Naive thymus-derived CD4-positive, alpha-beta T cell (primary cell): ENCODE measurements at regions of chr17 and their contacts with region 1.

Region 1: DNA sequence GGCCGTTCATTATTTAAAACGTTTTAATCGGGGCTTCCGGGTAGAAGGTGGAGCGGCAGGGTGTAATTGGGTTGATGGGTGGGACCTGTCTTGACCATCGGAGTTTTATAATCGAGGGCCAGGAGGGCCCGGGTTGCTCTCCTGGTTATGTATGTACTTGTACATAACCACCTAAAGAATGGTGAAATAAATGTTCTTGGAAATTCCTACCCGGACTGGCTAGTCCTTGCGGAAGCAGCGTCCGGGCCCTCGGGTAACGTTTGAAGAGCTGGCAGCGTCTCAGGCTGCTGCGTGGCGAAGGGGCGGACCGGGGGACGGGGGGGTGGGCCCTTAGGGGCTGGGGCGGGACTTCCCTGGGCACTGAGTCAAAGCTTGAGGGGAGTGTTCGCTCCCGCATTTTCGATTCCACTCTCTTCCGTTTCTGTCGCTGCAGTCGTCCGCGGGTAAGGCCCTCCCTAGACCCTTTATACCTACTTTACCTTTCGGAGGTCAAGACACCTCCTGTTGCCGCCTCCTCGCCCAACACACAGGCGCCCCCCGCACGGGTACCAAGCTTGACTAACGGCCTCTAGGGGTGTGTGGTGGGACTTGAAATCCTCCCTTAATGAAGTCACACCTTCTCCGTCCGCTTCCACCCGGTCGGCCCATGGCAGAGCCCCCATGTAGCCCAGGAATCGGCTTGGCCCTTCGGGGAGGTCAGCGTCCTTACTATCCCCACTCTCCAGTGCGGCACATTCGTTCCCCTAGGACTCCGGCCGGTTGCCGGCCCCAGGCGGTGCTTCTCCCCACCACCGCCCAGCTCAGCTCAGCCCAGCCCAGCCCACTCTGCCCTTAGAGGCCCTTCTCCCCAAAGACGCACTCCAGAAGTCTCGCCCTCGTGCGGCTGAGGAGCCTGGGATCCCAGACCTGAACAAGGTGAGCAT is at the start of gene TMEM106A:
- DNase-seq: peak; percentile 50 to 72 (median 70)
- ATAC-seq: peak; percentile 93
- H3K4me3 ChIP-seq: peak within 1 kb of the TSS; percentile 89
- H3K4me3 Mint-ChIP-seq: peak within 1 kb of the TSS; percentile 89 to 100 (median 96)
- H3K27ac ChIP-seq: peak within 1 kb of the TSS; percentile 86
- H3K27ac Mint-ChIP-seq: peak within 1 kb of the TSS; percentile 89 to 98 (median 94)
- H3K4me1 ChIP-seq: peaks cover 15 to 17% of the 10 kb centered on the region in 2 donors
- H3K4me1 Mint-ChIP-seq: peaks cover 24 to 55% (median 46%) of the 10 kb centered on the region in 7 donors
- H3K27me3 ChIP-seq: no peaks in the 10 kb centered on the region
- H3K27me3 Mint-ChIP-seq: no peaks in the 10 kb centered on the region
- total RNA-seq, gene TMEM106A: 10.4 to 20.7 (median 13.9) TPM

Region 2: GRCh38 chr17:42850954-42851353 is 360.8 kb before region 1 on chr17 and contains the start of gene AOC3:
- CTCF ChIA-PET with region 1: no interaction called
- POLR2A ChIA-PET with region 1: no interaction called
- intact Hi-C with region 1: no loop called
- DNase-seq: no peak
- ATAC-seq: no peak
- H3K4me3 ChIP-seq: no peak within 1 kb of the TSS
- H3K4me3 Mint-ChIP-seq: no peak within 1 kb of the TSS
- H3K27ac ChIP-seq: no peak within 1 kb of the TSS
- H3K27ac Mint-ChIP-seq: no peak within 1 kb of the TSS
- H3K4me1 ChIP-seq: no peaks in the 10 kb centered on the region
- H3K4me1 Mint-ChIP-seq: peaks cover 0 to 8% (median 0%) of the 10 kb centered on the region in 7 donors
- H3K27me3 ChIP-seq: no peaks in the 10 kb centered on the region
- H3K27me3 Mint-ChIP-seq: peaks cover 0 to 8% (median 0%) of the 10 kb centered on the region in 5 donors
- total RNA-seq, gene AOC3: 0.98 to 2.0 (median 1.1) TPM

Region 3: DNA sequence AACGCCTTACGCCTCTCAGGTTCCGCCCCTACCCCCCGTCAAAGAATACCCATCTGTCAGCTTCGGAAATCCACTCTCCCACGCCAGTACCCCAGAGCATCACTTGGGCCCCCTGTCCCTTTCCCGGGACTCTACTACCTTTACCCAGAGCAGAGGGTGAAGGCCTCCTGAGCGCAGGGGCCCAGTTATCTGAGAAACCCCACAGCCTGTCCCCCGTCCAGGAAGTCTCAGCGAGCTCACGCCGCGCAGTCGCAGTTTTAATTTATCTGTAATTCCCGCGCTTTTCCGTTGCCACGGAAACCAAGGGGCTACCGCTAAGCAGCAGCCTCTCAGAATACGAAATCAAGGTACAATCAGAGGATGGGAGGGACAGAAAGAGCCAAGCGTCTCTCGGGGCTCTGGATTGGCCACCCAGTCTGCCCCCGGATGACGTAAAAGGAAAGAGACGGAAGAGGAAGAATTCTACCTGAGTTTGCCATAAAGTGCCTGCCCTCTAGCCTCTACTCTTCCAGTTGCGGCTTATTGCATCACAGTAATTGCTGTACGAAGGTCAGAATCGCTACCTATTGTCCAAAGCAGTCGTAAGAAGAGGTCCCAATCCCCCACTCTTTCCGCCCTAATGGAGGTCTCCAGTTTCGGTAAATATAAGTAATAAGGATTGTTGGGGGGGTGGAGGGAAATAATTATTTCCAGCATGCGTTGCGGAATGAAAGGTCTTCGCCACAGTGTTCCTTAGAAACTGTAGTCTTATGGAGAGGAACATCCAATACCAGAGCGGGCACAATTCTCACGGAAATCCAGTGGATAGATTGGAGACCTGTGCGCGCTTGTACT is 86.4 kb before region 1 on chr17 and contains the start of gene BRCA1:
- CTCF ChIA-PET with region 1: no interaction called
- POLR2A ChIA-PET with region 1: no interaction called
- intact Hi-C with region 1: loop called (anchors 1 kb)
- DNase-seq: peak; percentile 78 to 98 (median 96)
- ATAC-seq: peak; percentile 100
- H3K4me3 ChIP-seq: peak within 1 kb of the TSS; percentile 83
- H3K4me3 Mint-ChIP-seq: peak within 1 kb of the TSS; percentile 88 to 97 (median 94)
- H3K27ac ChIP-seq: peak within 1 kb of the TSS; percentile 83
- H3K27ac Mint-ChIP-seq: peak within 1 kb of the TSS; percentile 88 to 98 (median 93)
- H3K4me1 ChIP-seq: peaks cover 6 to 8% of the 10 kb centered on the region in 2 donors
- H3K4me1 Mint-ChIP-seq: peaks cover 14 to 39% (median 30%) of the 10 kb centered on the region in 7 donors
- H3K27me3 ChIP-seq: no peaks in the 10 kb centered on the region
- H3K27me3 Mint-ChIP-seq: no peaks in the 10 kb centered on the region
- total RNA-seq, gene BRCA1: 2.6 to 54.1 (median 5.4) TPM

Region 4: GRCh38 chr17:43406676-43407645 is 195.2 kb after region 1 on chr17:
- CTCF ChIA-PET with region 1: no interaction called
- POLR2A ChIA-PET with region 1: no interaction called
- intact Hi-C with region 1: no loop called
- DNase-seq: no peak
- ATAC-seq: no peak
- H3K4me3 ChIP-seq: no peak overlapping the region
- H3K4me3 Mint-ChIP-seq: no peak overlapping the region
- H3K27ac ChIP-seq: no peak overlapping the region
- H3K27ac Mint-ChIP-seq: no peak overlapping the region
- H3K4me1 ChIP-seq: no peaks in the 10 kb centered on the region
- H3K4me1 Mint-ChIP-seq: peaks cover 0 to 9% (median 0%) of the 10 kb centered on the region in 7 donors
- H3K27me3 ChIP-seq: no peaks in the 10 kb centered on the region
- H3K27me3 Mint-ChIP-seq: peaks cover 0 to 9% (median 5%) of the 10 kb centered on the region in 5 donors